Activated CD4-positive, alpha-beta memory T cell treated with anti-CD3 and anti-CD28 coated beads for 36 hours (primary cell): ENCODE measurements at regions of chr1 and their contacts with region 1.

Region 1: GRCh38 chr1:7042322-7043190 is 257.3 kb downstream of the CAMTA1 start:
- DNase-seq: no peak
- H3K4me3 Mint-ChIP-seq: no peak overlapping the region
- H3K27ac Mint-ChIP-seq: no peak overlapping the region
- H3K4me1 Mint-ChIP-seq: no peaks in the 10 kb centered on the region
- H3K27me3 Mint-ChIP-seq: peaks cover 3% of the 10 kb centered on the region

Region 2: GRCh38 chr1:7013833-7014639 is 28.5 kb before region 1 on chr1:
- CTCF ChIA-PET with region 1: no interaction called
- POLR2A ChIA-PET with region 1: no interaction called
- intact Hi-C with region 1: no loop called
- DNase-seq: no peak
- H3K4me3 Mint-ChIP-seq: no peak overlapping the region
- H3K27ac Mint-ChIP-seq: no peak overlapping the region
- H3K4me1 Mint-ChIP-seq: no peaks in the 10 kb centered on the region
- H3K27me3 Mint-ChIP-seq: no peaks in the 10 kb centered on the region

Region 3: GRCh38 chr1:7218210-7218832 is 175.8 kb after region 1 on chr1:
- CTCF ChIA-PET with region 1: interaction called, 8 read pairs
- POLR2A ChIA-PET with region 1: no interaction called
- intact Hi-C with region 1: loop called (anchors 2 kb)
- DNase-seq: peak; percentile 43
- H3K4me3 Mint-ChIP-seq: no peak overlapping the region
- H3K27ac Mint-ChIP-seq: no peak overlapping the region
- H3K4me1 Mint-ChIP-seq: no peaks in the 10 kb centered on the region
- H3K27me3 Mint-ChIP-seq: peaks cover 21% of the 10 kb centered on the region

Region 4: GRCh38 chr1:7646981-7647901 is 604.7 kb after region 1 on chr1:
- CTCF ChIA-PET with region 1: interaction called, 18 read pairs
- POLR2A ChIA-PET with region 1: no interaction called
- intact Hi-C with region 1: no loop called
- DNase-seq: peak; percentile 76
- H3K4me3 Mint-ChIP-seq: no peak overlapping the region
- H3K27ac Mint-ChIP-seq: no peak overlapping the region
- H3K4me1 Mint-ChIP-seq: no peaks in the 10 kb centered on the region
- H3K27me3 Mint-ChIP-seq: peaks cover 1% of the 10 kb centered on the region